OCI-LY7 (cell line): ENCODE measurements at regions of chr7 and their contacts with region 1.

Region 1: GRCh38 chr7:33109005-33109757 is at the start of gene RP9:
- DNase-seq: peak; percentile 92
- H3K4me3 ChIP-seq: peak within 1 kb of the TSS; percentile 99
- H3K27ac ChIP-seq: peak within 1 kb of the TSS; percentile 73
- H3K4me1 ChIP-seq: peaks cover 25% of the 10 kb centered on the region
- CTCF ChIP-seq: peak; percentile 77
- total RNA-seq, gene RP9: 21.8 and 22.0 TPM in 2 replicates

Region 2: DNA sequence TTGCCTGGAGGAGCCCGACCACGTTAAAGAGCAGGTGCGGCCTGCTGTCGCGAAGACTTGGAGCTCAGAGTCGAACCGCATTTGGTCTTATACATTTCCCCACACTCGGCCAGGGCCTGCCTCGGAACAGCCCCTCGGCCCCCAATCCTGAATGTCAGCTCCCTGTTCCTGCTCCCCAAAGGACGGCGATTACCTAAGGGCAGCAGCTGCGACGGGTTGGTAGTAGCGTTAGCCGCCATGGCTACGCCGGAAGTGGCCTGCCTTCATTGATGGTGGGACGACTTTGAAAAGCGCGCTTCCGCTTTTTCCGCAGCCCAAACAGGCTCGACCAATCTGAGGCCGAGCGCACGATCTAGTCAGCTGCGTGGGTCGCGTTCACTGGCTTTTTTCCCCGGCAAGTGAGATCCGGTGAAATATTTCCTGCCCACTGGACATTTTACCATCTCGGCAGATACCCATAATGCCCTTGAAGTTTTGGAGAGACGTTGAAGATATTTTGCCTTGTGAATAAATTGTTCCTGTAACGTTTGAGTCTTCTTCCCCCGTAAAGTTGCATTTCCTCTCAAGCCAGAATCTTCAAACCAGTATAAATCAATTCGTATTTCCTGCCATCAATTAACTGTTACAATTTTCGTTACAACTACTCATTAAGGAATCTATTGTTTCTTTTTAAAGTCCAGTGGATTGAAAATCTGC is 618.9 kb before region 1 on chr7 and contains the start of gene LSM5:
- CTCF ChIA-PET with region 1: interaction called, 3 read pairs
- POLR2A ChIA-PET with region 1: no interaction called
- intact Hi-C with region 1: loop called (anchors 2 kb)
- DNase-seq: peak; percentile 96
- H3K4me3 ChIP-seq: peak within 1 kb of the TSS; percentile 84
- H3K27ac ChIP-seq: peak within 1 kb of the TSS; percentile 94
- H3K4me1 ChIP-seq: peaks cover 26% of the 10 kb centered on the region
- CTCF ChIP-seq: no peak
- total RNA-seq, gene LSM5: 33.8 and 38.9 TPM in 2 replicates

Region 3: GRCh38 chr7:32515890-32516550 is 593.2 kb before region 1 on chr7:
- CTCF ChIA-PET with region 1: no interaction called
- POLR2A ChIA-PET with region 1: no interaction called
- intact Hi-C with region 1: no loop called
- DNase-seq: no peak
- H3K4me3 ChIP-seq: no peak overlapping the region
- H3K27ac ChIP-seq: no peak overlapping the region
- H3K4me1 ChIP-seq: peaks cover 6% of the 10 kb centered on the region
- CTCF ChIP-seq: no peak

Region 4: DNA sequence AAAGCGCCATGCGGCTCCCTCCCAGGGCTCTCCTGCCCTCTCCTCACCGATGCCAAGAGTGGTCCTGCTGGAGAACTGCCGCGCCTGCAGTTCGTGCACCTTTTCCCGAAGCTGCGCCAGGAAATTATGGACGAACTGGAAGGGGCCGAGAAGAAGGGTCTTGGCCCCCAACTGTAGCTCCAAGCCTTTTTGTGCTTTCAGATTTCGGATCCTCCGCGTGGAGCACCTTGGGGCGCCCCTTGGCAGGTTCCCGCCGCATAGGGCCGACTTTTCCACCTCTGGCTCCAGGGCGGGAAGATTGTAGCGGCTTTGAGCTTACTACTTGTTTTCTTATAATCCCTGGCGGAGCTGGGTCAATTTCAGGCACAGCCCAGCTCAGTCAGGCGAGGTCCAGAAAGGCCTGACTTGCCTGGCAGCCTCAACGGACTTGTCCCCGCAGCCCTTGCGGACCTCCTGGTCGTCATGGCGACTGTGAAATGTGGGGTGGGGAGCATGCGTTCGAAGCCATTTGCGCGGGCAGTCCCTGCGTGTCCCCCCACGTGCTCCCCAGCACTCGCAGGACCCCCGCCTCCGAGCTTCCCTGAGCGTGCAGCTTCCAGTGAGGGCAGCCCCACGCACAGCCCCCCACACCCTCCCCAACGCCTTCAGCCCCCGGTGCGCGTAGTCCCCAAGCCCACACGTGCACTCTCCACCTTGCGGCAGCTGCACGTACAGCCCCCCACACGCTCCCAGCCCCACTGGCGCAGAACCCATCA is 347.6 kb before region 1 on chr7:
- CTCF ChIA-PET with region 1: no interaction called
- POLR2A ChIA-PET with region 1: no interaction called
- intact Hi-C with region 1: loop called (anchors 2 kb)
- DNase-seq: no peak
- H3K4me3 ChIP-seq: no peak overlapping the region
- H3K27ac ChIP-seq: no peak overlapping the region
- H3K4me1 ChIP-seq: no peaks in the 10 kb centered on the region
- CTCF ChIP-seq: no peak

Region 5: GRCh38 chr7:32846701-32847100 is 262.5 kb before region 1 on chr7:
- CTCF ChIA-PET with region 1: interaction called, 15 read pairs
- POLR2A ChIA-PET with region 1: interaction called, 9 read pairs
- intact Hi-C with region 1: loop called (anchors 1 kb)
- DNase-seq: peak; percentile 90
- H3K4me3 ChIP-seq: no peak overlapping the region
- H3K27ac ChIP-seq: no peak overlapping the region
- H3K4me1 ChIP-seq: peaks cover 4% of the 10 kb centered on the region
- CTCF ChIP-seq: peak; percentile 97

Region 6: DNA sequence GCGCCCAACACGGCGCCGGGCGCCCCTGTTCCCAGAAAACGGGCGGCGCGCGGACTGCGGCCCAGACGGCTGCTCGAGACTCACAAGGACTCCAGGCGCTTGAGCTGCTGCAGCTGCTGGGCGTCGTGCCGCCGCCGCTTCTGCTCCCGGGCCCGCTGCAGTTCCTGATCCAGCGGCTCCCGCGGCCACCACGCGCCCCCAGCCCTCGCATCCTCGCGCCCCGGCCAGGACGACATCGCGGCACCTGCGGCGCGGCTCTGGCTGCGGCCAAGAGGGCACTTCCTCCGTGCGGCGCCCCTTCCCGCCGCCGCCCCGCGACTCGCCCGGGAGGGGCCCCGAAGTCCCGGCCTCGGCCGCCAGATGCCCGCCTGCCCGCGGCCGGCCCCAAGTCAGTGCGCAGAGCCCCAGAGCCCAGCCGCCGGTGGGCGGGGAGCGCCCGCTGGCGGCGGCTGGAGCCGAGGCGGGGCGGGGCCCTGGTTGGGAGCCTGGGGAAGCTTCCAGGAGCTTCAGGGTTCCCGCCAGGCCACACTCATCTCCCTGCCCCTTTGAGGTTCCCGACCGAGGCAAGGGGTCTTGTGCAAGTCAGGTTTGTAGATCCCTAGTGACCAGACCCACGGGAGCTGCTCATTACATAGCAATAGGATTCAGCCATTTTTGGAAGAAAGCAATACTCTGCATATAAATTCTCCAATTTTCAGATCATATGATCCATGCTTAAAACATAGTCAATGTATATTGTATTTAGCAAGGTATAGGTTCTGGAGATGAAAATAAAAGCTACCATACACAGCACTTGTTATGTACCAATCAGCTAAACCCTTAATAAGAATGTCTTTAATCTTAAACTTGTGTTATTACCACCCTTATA is 166.2 kb before region 1 on chr7:
- CTCF ChIA-PET with region 1: no interaction called
- POLR2A ChIA-PET with region 1: interaction called, 4 read pairs
- intact Hi-C with region 1: loop called (anchors 10 kb)
- DNase-seq: peak; percentile 41
- H3K4me3 ChIP-seq: peak overlapping the region; percentile 29
- H3K27ac ChIP-seq: no peak overlapping the region
- H3K4me1 ChIP-seq: no peaks in the 10 kb centered on the region
- CTCF ChIP-seq: peak; percentile 63

Region 7: DNA sequence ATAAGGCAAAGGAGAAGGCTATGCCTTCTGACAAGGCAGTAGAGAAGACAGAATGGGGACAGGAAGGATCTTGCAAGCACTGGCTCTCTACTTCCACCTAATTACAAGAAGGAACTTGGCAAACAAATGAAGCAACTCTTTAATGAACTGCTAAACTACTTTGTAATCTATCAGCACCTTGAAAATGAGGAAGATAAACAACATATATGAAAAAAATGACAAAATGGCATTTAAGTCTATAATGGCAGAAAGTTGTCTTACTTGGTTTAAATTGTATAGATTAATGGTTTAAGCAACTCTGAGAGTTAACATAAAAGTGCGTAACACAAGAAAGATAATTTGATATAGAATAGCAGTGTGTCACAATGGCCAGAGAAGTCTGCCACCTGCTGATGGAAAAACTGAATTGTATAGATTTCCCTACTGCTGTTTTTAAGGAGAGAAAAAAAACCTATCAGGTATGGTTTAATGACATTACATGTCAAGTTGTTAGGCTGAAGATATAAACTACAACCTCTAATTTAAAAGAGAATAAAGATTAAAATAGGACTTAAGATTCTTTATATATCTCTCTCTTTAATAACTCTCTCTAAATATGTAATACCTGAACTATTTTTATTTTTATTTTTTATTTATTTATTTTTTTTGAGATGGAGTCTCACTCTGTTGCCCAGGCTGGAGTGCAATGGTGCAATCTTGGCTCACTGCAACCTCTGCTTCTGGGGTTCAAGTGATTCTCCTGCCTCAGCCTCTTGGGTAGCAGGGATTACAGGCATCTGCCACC is 58.5 kb before region 1 on chr7:
- CTCF ChIA-PET with region 1: no interaction called
- POLR2A ChIA-PET with region 1: interaction called, 7 read pairs
- intact Hi-C with region 1: loop called (anchors 2 kb)
- DNase-seq: peak; percentile 60
- H3K4me3 ChIP-seq: peak overlapping the region; percentile 46
- H3K27ac ChIP-seq: peak overlapping the region; percentile 78
- H3K4me1 ChIP-seq: peaks cover 78% of the 10 kb centered on the region
- CTCF ChIP-seq: peak; percentile 91

Region 8: DNA sequence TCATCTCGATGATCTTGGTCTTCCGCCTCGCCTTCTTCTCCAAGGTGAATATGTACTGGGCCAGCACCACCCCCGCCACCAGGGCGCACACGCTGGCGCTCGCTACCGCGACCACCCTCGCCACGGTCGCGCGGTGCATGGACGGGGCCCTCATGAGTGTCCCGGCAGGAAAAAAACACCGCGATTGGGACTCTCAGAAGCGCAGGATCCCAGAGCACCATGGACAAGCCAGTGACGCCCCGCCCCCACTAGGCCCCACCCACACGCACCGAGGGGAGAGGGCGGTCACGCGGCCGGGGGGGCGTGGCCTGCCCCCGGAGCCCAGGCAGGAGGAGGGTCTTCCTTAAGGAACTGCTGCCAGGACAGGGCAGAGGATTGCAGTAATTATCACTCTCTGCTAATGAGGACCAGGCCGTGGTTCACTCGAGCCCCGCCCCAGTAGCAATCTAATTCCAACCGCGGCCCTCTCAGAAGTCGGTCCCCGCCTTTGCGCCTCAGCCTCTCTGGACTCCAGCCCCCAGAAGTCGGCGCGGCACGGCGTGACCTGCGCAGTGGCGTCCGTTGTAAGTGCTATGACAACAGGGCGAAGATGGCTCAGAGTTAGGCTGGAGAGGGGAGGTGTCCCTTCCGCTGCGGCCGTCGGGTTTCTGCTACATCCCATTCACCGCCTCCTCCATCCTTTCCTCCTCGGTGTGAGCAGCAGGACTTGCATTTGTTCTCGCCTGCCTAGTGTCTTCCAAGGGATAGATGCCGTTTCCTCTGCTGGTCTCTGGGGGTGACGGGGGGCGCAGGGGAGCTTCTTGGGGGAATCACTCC is 20.0 kb after region 1 on chr7 and contains the start of gene BBS9:
- CTCF ChIA-PET with region 1: no interaction called
- POLR2A ChIA-PET with region 1: interaction called, 6 read pairs
- intact Hi-C with region 1: loop called (anchors 1 kb)
- DNase-seq: peak; percentile 94
- H3K4me3 ChIP-seq: peak within 1 kb of the TSS; percentile 75
- H3K27ac ChIP-seq: peak within 1 kb of the TSS; percentile 26
- H3K4me1 ChIP-seq: peaks cover 17% of the 10 kb centered on the region
- CTCF ChIP-seq: no peak
- total RNA-seq, gene BBS9: 4.8 and 6.8 TPM in 2 replicates